ENCODE measurements at regions of chr5 and their contacts with region 1.

Region 1: DNA sequence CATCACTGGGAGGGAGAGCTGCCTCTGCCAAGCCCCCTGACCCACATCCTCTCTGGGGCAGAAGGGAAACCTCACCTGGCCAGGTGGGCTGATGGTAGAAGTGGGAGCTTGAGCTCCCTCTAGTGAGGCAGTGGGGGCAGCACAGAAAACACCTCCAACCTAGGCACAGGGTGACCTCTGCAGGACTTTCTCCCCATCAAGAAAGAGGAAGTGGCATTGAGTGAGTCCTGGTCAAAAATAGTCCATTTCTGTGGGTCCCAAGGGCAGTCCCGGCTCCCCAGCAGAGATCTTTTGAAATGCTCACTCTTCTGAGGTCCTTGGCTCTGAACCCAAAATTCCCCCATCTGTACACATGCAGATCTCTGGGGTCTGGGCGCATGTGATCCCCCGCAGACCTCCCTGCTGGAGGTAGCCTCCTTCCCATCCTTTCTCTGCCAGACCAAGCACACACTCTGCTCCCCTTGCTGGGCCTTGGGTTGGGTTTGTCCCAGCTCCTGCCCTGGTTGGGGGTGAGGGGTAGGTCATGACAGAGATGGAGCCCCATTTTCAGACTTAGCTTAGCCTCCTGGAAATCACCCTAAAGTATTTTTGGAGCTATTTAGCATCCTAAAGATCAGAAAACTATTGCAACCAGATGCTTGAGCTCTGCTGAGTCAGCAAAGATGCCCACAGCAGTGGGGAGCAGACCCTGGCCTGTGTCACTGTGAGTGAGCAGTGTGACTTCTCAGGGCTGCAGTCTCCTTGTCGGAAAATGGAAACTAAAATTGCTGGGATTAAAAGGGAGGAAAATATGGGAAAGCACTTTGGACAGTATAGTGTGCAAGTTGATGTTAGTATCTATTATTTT is 41.6 kb upstream of the LCP2 start:
- DNase-seq: peak; percentile 45
- H3K4me3 Mint-ChIP-seq: no peak overlapping the region
- H3K27ac Mint-ChIP-seq: peak overlapping the region; percentile 63
- H3K4me1 Mint-ChIP-seq: peaks cover 20% of the 10 kb centered on the region
- H3K27me3 Mint-ChIP-seq: peaks cover 4% of the 10 kb centered on the region

Region 2: DNA sequence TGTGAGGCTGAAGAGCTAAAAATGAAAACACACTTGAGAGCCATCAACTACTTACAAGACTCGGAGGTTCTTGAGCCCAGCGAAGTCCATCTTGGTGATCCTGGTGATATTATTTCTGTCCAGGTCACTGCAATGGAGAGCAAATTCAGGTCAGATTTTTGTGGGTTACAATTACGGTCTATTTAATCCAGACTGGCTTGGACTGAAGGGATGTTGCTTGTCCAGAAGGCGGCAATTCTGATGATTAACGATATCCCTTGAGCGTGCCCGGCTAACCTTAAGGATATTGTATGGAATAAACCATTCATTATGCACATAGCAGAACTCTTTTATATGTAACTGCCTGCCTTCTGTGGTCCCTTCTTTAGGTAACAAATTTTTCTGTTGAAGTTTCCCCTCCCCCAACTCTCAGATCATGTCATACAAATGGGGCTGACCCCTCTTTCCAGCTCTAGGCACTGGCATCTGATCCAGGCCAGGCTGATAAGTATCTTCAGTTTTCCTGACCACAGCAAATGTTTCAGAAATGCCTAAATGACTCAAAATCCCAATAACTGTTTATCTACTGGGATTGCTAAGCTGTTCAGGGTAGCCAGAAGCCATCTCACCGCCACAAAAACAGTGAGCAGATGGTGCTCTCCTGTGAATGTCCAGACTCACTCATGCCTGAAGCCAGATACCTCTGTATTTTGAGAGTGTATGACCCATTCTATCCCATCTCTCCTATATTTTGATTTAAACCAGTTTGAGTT is 1087.6 kb before region 1 on chr5:
- intact Hi-C with region 1: no loop called
- DNase-seq: no peak
- H3K4me3 Mint-ChIP-seq: no peak overlapping the region
- H3K27ac Mint-ChIP-seq: no peak overlapping the region
- H3K4me1 Mint-ChIP-seq: no peaks in the 10 kb centered on the region
- H3K27me3 Mint-ChIP-seq: peaks cover 2% of the 10 kb centered on the region

Region 3: DNA sequence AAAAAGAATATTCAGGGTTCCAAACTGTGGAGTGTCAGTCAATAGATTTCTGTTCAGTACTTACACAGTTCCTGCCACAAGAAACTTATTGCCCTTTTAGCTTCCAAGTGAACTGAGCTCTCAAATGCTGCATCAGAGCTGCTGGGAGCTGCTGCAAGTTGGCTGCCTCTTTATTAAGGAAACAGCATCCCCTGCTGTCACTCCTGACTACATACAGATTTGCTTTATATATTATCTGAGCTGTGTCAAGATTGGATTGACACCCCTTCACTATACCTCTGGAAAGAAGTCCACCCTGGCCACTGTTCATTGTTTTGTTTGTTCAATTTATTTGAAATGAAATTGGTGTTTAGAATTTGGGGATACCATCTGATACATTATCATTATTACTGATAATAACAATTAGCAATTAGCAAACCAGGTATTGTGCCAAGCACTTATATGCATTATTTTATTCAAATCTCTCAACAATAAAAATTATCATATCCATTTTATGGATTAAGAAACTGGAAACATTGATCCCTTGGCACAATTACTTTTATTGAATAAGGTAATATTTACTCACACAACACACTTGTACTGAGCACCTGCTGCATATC is 122.8 kb before region 1 on chr5:
- intact Hi-C with region 1: no loop called
- DNase-seq: no peak
- H3K4me3 Mint-ChIP-seq: no peak overlapping the region
- H3K27ac Mint-ChIP-seq: no peak overlapping the region
- H3K4me1 Mint-ChIP-seq: no peaks in the 10 kb centered on the region
- H3K27me3 Mint-ChIP-seq: peaks cover 9% of the 10 kb centered on the region

Region 4: DNA sequence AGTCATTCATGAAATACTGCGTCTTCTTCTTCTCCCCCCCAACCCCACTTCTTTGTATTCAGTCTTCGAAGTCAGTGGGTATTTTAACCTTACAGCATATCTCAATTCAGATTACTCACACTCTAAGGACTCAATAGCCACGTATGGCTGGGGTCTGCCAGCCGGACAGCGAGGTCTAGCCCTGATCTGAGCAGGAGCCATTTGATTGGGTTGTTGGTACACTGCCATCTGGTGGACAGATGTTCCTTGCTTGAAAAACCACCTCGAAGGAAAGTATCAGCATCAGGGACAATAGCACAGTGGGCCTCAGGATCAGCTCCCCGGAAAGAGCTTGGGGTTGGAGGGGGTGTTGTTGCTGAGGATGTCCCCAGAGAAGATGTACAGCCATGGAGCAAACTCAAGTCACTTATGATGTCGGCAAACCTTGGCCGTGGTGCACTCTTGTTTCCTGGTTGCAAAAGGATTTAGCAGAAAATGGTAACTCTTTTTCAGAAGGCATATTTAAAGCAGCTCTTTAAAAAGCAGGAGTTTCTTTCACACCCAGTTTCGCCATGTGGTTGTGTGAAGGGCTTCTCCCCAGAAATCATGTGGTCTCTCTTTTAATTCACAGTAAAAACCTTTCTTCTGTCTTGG is 81.7 kb after region 1 on chr5:
- intact Hi-C with region 1: loop called (anchors 1 kb)
- DNase-seq: peak; percentile 20
- H3K4me3 Mint-ChIP-seq: no peak overlapping the region
- H3K27ac Mint-ChIP-seq: no peak overlapping the region
- H3K4me1 Mint-ChIP-seq: no peaks in the 10 kb centered on the region
- H3K27me3 Mint-ChIP-seq: peaks cover 25% of the 10 kb centered on the region

Measured in activated T-helper 1 cell treated with anti-CD3 and anti-CD28 coated beads, Interleukin-12 subunit alpha, Interleukin-12 subunit beta, Interleukin-2, Interleukin-4 antibody, amounts not matched to agents 30 ng/mL and 10 ng/mL and 1 ng/mL, durations not matched to agents 14 hours and 24 hours and 36 hours (primary cell).